ENCODE measurements at regions of chr7 and their contacts with region 1.

Region 1: DNA sequence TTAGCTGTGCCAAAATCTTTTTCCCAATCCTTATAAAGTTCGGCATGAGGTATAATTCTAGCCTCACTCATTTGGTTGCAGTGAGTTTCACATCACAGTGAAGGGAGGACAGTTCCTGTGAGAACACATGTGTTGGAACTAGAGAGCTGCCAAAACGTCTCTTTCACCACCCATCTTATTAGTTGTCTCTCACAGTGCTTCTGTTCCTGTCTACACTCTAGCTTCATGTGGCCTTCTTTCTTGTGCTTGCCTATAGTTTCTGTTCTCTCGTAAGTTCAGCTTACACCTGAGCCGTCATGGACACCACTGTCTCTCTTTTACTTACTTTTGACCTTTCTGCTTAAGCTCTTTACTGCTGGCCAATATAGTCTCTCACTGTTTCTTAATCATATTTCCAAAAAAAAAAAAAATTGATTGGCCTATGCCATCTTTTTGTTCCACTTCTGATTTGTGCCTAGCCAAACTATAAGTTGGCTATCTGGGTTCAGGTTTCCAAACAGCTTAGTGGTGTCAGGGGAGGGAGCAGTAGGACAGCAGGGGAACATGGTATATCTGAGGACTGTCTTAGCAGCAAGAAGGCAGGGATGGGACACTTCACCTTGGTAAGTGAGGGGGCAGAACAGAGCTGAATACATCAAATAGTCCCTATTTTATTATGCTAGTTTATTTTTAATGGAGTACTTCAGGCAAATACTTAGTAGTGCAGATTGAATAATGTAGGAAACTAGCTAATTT is 38.0 kb downstream of the ZNRF2 start:
- DNase-seq: peak; percentile 69
- H3K4me3 Mint-ChIP-seq: peak overlapping the region; percentile 59
- H3K27ac Mint-ChIP-seq: peak overlapping the region; percentile 79
- H3K4me1 Mint-ChIP-seq: peaks cover 50% of the 10 kb centered on the region
- H3K27me3 Mint-ChIP-seq: no peaks in the 10 kb centered on the region
- CTCF ChIP-seq: no peak

Region 2: DNA sequence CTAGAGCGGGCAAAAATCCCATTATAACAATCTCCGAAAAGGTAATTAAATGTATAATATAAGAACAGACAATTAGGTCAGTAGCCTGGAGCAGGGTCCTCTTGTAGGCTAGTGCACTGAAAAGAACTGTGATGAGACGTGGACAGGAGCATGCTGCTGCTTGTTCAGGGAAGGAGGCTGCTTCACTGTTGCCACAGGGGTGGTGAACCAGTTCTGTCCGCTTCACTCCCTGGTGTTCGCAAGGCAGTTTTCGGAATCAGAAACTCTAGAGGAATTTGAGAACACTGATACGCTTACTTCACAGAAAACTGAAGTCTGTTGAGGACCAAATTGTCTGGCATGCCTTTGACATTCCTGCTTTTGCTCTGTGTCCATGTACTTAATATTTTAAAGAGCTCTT is 20.7 kb before region 1 on chr7:
- CTCF ChIA-PET with region 1: interaction called, 5 read pairs
- POLR2A ChIA-PET with region 1: interaction called, 65 read pairs
- intact Hi-C with region 1: no loop called
- DNase-seq: peak; percentile 84
- H3K4me3 Mint-ChIP-seq: peak overlapping the region; percentile 31
- H3K27ac Mint-ChIP-seq: peak overlapping the region; percentile 27
- H3K4me1 Mint-ChIP-seq: peaks cover 29% of the 10 kb centered on the region
- H3K27me3 Mint-ChIP-seq: no peaks in the 10 kb centered on the region
- CTCF ChIP-seq: no peak

Region 3: GRCh38 chr7:30308389-30308788 is 14.0 kb before region 1 on chr7:
- CTCF ChIA-PET with region 1: interaction called, 5 read pairs
- POLR2A ChIA-PET with region 1: interaction called, 65 read pairs
- intact Hi-C with region 1: no loop called
- DNase-seq: peak; percentile 48
- H3K4me3 Mint-ChIP-seq: no peak overlapping the region
- H3K27ac Mint-ChIP-seq: no peak overlapping the region
- H3K4me1 Mint-ChIP-seq: peaks cover 21% of the 10 kb centered on the region
- H3K27me3 Mint-ChIP-seq: no peaks in the 10 kb centered on the region
- CTCF ChIP-seq: no peak

Region 4: DNA sequence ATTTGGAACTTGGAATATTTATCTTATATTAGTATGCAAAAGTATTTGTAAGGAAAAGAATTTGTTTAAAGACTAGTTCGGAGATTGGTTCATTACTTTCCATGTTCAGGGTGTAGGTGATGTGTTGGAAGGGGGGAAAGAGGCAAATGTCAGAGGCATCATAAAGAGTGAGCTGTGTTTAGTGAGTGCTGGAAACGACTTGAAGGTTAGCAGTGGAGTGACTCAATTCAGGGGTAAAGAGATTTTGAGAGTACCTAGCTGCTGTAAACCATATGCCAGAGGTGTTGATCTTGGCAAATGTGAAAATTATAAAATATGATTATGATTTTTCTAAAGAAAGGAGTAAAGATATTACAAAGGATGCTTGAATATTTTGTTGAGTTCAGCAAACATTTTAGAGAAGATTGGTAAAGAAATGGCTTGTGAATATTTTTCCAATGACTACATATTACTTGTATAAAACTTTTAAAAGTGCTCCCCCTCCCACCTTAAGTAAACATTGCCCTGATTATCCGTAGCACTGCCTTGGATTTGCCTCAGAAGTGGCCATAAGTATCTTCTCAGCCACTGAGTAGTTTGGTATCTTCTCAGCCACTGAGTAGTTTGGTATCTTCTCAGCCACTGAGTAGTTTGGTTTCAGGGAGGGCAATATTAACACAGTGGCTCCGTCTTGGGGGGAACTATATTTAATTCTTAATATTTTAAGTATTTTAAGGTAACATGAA is 13.5 kb after region 1 on chr7:
- CTCF ChIA-PET with region 1: interaction called, 4 read pairs
- POLR2A ChIA-PET with region 1: interaction called, 27 read pairs
- intact Hi-C with region 1: no loop called
- DNase-seq: no peak
- H3K4me3 Mint-ChIP-seq: no peak overlapping the region
- H3K27ac Mint-ChIP-seq: peak overlapping the region; percentile 21
- H3K4me1 Mint-ChIP-seq: peaks cover 28% of the 10 kb centered on the region
- H3K27me3 Mint-ChIP-seq: no peaks in the 10 kb centered on the region
- CTCF ChIP-seq: no peak

Region 5: GRCh38 chr7:30406664-30407425 is 84.4 kb after region 1 on chr7:
- CTCF ChIA-PET with region 1: interaction called, 4 read pairs
- POLR2A ChIA-PET with region 1: interaction called, 15 read pairs
- intact Hi-C with region 1: no loop called
- DNase-seq: peak; percentile 96
- H3K4me3 Mint-ChIP-seq: peak overlapping the region; percentile 36
- H3K27ac Mint-ChIP-seq: peak overlapping the region; percentile 96
- H3K4me1 Mint-ChIP-seq: peaks cover 44% of the 10 kb centered on the region
- H3K27me3 Mint-ChIP-seq: no peaks in the 10 kb centered on the region
- CTCF ChIP-seq: no peak

Region 6: GRCh38 chr7:30708976-30709375 is 386.5 kb after region 1 on chr7:
- CTCF ChIA-PET with region 1: no interaction called
- POLR2A ChIA-PET with region 1: no interaction called
- intact Hi-C with region 1: no loop called
- DNase-seq: peak; percentile 47
- H3K4me3 Mint-ChIP-seq: no peak overlapping the region
- H3K27ac Mint-ChIP-seq: no peak overlapping the region
- H3K4me1 Mint-ChIP-seq: no peaks in the 10 kb centered on the region
- H3K27me3 Mint-ChIP-seq: peaks cover 18% of the 10 kb centered on the region
- CTCF ChIP-seq: no peak

Measured in MCF 10A (cell line).